ENCODE measurements at regions of chr7 and their contacts with region 1.

Region 1: GRCh38 chr7:100577103-100577906 is 3.6 kb upstream of the SAP25 start:
- DNase-seq: no peak
- ATAC-seq: no peak
- H3K4me3 ChIP-seq: no peak overlapping the region
- H3K4me3 Mint-ChIP-seq: no peak overlapping the region
- H3K27ac ChIP-seq: no peak overlapping the region
- H3K27ac Mint-ChIP-seq: no peak overlapping the region
- H3K4me1 ChIP-seq: peaks cover 18 to 44% of the 10 kb centered on the region in 2 experiments
- H3K4me1 Mint-ChIP-seq: peaks cover 6 to 7% (median 6%) of the 10 kb centered on the region in 3 donors
- H3K27me3 ChIP-seq: peaks cover 0 to 2% of the 10 kb centered on the region in 2 experiments
- H3K27me3 Mint-ChIP-seq: no peaks in the 10 kb centered on the region

Region 2: GRCh38 chr7:99616359-99617191 is 960.7 kb before region 1 on chr7 and contains the start of gene ZSCAN25:
- CTCF ChIA-PET with region 1: no interaction called
- POLR2A ChIA-PET with region 1: no interaction called
- DNase-seq: peak; percentile 68 to 92 (median 80)
- ATAC-seq: peak; percentile 96 to 98 (median 98)
- H3K4me3 ChIP-seq: peak within 1 kb of the TSS; percentile 86 to 89
- H3K4me3 Mint-ChIP-seq: peak within 1 kb of the TSS; percentile 95 to 97 (median 97)
- H3K27ac ChIP-seq: peak within 1 kb of the TSS; percentile 70
- H3K27ac Mint-ChIP-seq: peak within 1 kb of the TSS; percentile 93 to 97
- H3K4me1 ChIP-seq: peaks cover 6 to 22% of the 10 kb centered on the region in 2 experiments
- H3K4me1 Mint-ChIP-seq: peaks cover 42 to 53% (median 42%) of the 10 kb centered on the region in 3 donors
- H3K27me3 ChIP-seq: no peaks in the 10 kb centered on the region
- H3K27me3 Mint-ChIP-seq: no peaks in the 10 kb centered on the region
- total RNA-seq, gene ZSCAN25: 43.1 to 50.3 (median 49.8) TPM

Region 3: DNA sequence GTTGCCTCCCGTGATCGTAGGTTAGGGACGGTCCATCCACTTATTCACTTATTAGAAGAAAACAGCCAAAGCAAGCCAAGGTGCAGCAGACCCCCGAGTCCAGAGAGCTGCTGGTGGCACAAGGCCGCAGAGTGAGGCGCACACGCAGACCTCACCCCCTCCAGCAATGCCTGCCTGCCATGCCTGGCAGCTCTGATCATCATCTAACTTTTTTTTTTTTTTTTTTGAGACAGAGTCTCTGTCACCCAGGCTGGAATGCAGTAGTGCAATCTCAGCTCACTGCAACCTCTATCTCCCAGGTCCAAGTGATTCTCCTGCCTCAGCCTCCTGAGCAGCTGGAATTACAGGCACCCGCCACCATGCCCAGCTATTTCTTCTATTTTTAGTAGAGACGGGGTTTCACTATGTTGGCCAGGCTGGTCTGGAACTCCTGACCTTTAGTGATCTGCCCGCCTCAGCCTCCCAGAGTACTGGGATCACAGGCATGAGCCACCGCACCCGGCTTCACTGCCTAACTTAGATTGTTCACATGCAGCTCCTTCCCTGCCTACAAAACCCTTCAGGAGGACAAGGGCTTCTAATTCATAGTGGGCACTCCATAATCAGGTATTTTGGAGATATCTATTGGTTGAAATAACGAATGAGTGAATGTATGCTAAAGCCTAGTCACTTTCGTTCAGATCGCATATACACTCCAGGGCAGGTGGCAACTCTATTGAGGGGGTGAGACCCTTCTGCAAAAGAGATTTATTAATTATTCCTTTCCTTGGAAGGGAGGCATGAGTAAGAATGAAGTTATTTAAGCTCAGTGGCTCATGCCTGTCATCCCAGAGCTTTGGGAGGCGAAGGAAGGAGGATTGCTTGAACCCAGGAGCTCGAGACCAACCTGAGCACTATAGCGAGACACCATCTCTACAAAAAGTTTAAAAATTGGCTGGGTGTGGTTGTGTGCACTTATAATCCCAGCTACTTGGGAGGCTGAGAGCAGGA is 523.8 kb after region 1 on chr7:
- CTCF ChIA-PET with region 1: interaction called in 1 of 2 experiments, 10 read pairs
- POLR2A ChIA-PET with region 1: no interaction called
- DNase-seq: no peak
- ATAC-seq: no peak
- H3K4me3 ChIP-seq: no peak overlapping the region
- H3K4me3 Mint-ChIP-seq: no peak overlapping the region
- H3K27ac ChIP-seq: no peak overlapping the region
- H3K27ac Mint-ChIP-seq: no peak overlapping the region
- H3K4me1 ChIP-seq: peaks cover 0 to 8% of the 10 kb centered on the region in 2 experiments
- H3K4me1 Mint-ChIP-seq: peaks cover 6 to 9% (median 8%) of the 10 kb centered on the region in 3 donors
- H3K27me3 ChIP-seq: peaks cover 3 to 63% of the 10 kb centered on the region in 2 experiments
- H3K27me3 Mint-ChIP-seq: peaks cover 33 to 44% of the 10 kb centered on the region in 2 donors

Measured in T-cell (primary cell).